HEK293T (cell line): ENCODE measurements at regions of chr2 and their contacts with region 1.

Region 1: GRCh38 chr2:71157124-71157793 is 26.8 kb downstream of the MPHOSPH10 start:
- DNase-seq: peak; percentile 76

Region 2: GRCh38 chr2:70214953-70215549 is 942.2 kb before region 1 on chr2:
- CTCF ChIA-PET with region 1: no interaction called
- POLR2A ChIA-PET with region 1: no interaction called
- DNase-seq: no peak

Region 3: GRCh38 chr2:70964596-70965386 is 192.5 kb before region 1 on chr2:
- CTCF ChIA-PET with region 1: no interaction called
- POLR2A ChIA-PET with region 1: no interaction called
- DNase-seq: no peak

Region 4: GRCh38 chr2:71100195-71100964 is 56.9 kb before region 1 on chr2:
- CTCF ChIA-PET with region 1: interaction called, 11 read pairs
- POLR2A ChIA-PET with region 1: no interaction called
- DNase-seq: peak; percentile 83

Region 5: GRCh38 chr2:71181332-71181731 is 24.1 kb after region 1 on chr2:
- CTCF ChIA-PET with region 1: no interaction called
- POLR2A ChIA-PET with region 1: no interaction called
- DNase-seq: no peak

Region 6: DNA sequence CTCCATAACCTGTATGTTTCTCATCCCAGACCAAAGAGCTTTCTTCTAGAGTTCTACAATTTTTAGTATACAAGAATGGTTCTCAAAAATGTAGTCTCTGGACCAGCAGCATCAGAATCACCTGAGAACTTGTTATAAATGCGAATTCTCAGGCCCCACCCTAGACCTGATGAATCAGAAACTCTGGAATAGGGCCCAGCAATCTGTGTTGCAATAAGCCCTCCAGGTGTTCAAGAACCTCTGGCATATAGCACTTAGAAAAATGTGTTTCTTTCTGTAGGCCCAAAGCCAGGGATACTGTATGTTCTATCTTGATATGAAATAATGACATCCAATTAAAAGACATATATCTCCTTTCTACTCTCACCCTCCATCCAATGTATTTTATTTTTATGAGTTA is 59.2 kb after region 1 on chr2:
- CTCF ChIA-PET with region 1: no interaction called
- POLR2A ChIA-PET with region 1: no interaction called
- DNase-seq: no peak